Activated T-helper 1 cell treated with anti-CD3 and anti-CD28 coated beads, Interleukin-12 subunit alpha, Interleukin-12 subunit beta, Interleukin-2, Interleukin-4 antibody, amounts not matched to agents 30 ng/mL and 10 ng/mL and 1 ng/mL, durations not matched to agents 14 hours and 24 hours and 36 hours (primary cell): ENCODE measurements at regions of chrX and their contacts with region 1.

Region 1: GRCh38 chrX:3659761-3660160 is 53.7 kb downstream of the PRKX start:
- DNase-seq: no peak
- H3K4me3 Mint-ChIP-seq: no peak overlapping the region
- H3K27ac Mint-ChIP-seq: no peak overlapping the region
- H3K4me1 Mint-ChIP-seq: peaks cover 8% of the 10 kb centered on the region
- H3K27me3 Mint-ChIP-seq: no peaks in the 10 kb centered on the region

Region 2: DNA sequence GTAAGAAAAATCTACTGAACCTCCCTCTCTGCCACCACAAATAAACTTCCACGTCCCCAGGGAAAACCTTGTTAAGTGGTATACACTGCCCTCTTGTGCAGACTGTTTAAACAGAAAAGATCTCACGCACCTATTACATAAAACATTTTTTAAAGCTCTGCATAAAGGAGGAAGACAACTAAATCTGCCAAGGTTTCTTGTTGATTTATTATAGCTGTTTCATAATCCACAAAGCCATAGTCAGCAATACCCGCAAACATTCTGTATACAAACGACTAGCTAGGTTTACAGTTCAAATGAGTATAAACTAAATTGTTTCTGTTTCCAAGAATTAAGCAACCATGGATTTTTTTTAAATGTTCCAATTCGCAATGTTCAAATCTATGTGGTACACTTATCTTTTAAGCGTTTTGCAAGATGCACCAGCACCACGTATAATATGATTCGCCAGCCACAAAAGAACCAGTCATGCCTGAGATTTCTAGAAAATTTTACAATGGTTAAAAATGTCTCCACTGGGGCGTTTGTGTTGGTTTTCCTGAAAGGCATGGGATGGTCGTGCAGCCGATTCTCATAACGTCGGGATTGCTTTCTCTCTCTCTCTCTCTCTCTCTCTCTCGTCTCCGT is 110.9 kb before region 1 on chrX:
- intact Hi-C with region 1: no loop called
- DNase-seq: no peak
- H3K4me3 Mint-ChIP-seq: no peak overlapping the region
- H3K27ac Mint-ChIP-seq: no peak overlapping the region
- H3K4me1 Mint-ChIP-seq: no peaks in the 10 kb centered on the region
- H3K27me3 Mint-ChIP-seq: peaks cover 4% of the 10 kb centered on the region

Region 3: GRCh38 chrX:3788509-3789233 is 128.9 kb after region 1 on chrX:
- intact Hi-C with region 1: loop called (anchors 10 kb)
- DNase-seq: no peak
- H3K4me3 Mint-ChIP-seq: no peak overlapping the region
- H3K27ac Mint-ChIP-seq: no peak overlapping the region
- H3K4me1 Mint-ChIP-seq: peaks cover 9% of the 10 kb centered on the region
- H3K27me3 Mint-ChIP-seq: peaks cover 13% of the 10 kb centered on the region

Region 4: GRCh38 chrX:4435905-4436304 is 776.1 kb after region 1 on chrX:
- intact Hi-C with region 1: no loop called
- DNase-seq: no peak
- H3K4me3 Mint-ChIP-seq: no peak overlapping the region
- H3K27ac Mint-ChIP-seq: no peak overlapping the region
- H3K4me1 Mint-ChIP-seq: no peaks in the 10 kb centered on the region
- H3K27me3 Mint-ChIP-seq: no peaks in the 10 kb centered on the region